ENCODE measurements at regions of chrX and their contacts with region 1.

Region 1: DNA sequence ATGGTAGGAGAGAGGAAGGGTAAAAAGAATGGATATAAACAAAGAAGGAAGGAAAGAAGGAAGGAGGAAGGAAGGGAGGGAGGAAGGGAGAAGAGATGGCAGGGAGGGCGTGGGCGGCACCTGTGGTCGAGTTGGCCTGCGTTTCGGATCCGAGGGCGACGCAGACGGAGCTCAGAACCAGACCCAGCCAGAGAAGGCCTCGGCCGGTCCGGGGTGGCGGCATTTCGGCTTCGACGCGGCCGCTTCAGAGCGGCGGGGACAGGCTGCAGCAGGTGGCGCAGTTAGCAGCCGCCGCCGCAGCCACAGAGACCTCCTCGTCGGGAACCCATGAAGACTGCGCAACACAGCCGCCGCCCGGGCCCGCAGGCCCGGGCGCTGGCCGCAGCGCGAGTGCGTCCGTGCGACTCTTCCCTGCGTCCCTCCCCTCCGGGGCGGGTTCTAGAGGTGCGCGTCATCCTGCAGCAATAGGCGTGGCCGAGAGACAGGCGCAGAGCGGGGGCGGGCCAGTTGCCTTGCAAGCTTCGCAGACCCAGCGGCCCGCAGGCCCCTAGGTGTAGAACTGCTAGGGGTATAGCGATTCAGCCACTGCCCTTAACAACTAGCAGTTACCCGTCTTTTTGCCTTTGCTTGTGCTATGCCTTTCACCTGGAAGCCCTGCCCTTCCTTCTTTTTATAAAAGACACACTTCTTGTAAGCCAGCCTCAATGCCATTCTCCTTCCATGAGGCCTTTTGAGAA is at the start of gene IDS:
- DNase-seq: peak; percentile 87
- H3K4me3 Mint-ChIP-seq: peak within 1 kb of the TSS; percentile 99
- H3K27ac Mint-ChIP-seq: peak within 1 kb of the TSS; percentile 100
- H3K4me1 Mint-ChIP-seq: peaks cover 45% of the 10 kb centered on the region
- H3K27me3 Mint-ChIP-seq: no peaks in the 10 kb centered on the region
- total RNA-seq, gene IDS: 46.6 and 48.9 TPM in 2 replicates

Region 2: GRCh38 chrX:147911192-147912022 is 1593.7 kb before region 1 on chrX and contains the start of gene FMR1:
- intact Hi-C with region 1: loop called (anchors 10 kb)
- DNase-seq: peak; percentile 91
- H3K4me3 Mint-ChIP-seq: peak within 1 kb of the TSS; percentile 96
- H3K27ac Mint-ChIP-seq: peak within 1 kb of the TSS; percentile 92
- H3K4me1 Mint-ChIP-seq: peaks cover 37% of the 10 kb centered on the region
- H3K27me3 Mint-ChIP-seq: no peaks in the 10 kb centered on the region
- total RNA-seq, gene FMR1: 35.9 and 37.5 TPM in 2 replicates

Region 3: DNA sequence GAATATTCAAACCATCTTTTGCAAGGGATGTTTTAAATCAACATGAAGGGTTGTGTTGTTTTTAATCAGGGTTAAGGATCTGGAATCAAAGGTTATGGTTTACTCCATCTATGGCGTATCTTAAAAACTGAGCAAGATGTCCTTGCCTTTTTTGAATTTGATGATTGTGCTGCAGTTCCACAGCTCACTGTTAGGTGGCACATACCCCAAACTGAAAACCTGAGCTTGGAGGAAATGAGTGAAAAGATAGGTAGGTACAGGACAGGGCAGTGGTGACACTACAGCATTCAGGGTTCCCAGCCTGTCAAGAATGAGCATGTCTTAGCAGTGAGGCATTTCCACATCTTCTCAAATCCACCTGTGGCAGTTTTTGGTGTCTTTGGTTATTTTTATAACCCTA is 22.6 kb after region 1 on chrX:
- intact Hi-C with region 1: loop called (anchors 1 kb)
- DNase-seq: no peak
- H3K4me3 Mint-ChIP-seq: no peak overlapping the region
- H3K27ac Mint-ChIP-seq: peak overlapping the region; percentile 74
- H3K4me1 Mint-ChIP-seq: peaks cover 19% of the 10 kb centered on the region
- H3K27me3 Mint-ChIP-seq: no peaks in the 10 kb centered on the region

Region 4: DNA sequence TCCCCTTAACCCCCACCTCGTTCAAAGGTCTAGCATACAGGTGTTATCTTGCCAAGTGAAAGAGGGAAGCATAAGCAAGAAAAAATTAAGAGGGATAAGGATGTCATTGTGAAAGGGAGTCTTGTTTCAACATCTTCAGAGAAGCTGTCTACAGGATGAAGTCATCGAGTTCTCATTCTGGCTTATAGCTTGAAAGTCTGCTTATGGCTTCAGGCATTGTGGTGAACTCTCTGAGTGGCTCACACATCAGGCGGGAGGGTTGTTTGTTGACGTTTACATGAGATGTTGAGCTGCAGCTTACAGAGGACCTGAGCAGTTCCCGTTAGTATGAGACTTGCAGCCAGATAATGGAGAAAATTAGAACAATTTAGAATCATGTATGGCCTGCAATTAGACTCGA is 65.6 kb after region 1 on chrX:
- intact Hi-C with region 1: loop called (anchors 10 kb)
- DNase-seq: no peak
- H3K4me3 Mint-ChIP-seq: no peak overlapping the region
- H3K27ac Mint-ChIP-seq: no peak overlapping the region
- H3K4me1 Mint-ChIP-seq: peaks cover 23% of the 10 kb centered on the region
- H3K27me3 Mint-ChIP-seq: peaks cover 2% of the 10 kb centered on the region

Region 5: DNA sequence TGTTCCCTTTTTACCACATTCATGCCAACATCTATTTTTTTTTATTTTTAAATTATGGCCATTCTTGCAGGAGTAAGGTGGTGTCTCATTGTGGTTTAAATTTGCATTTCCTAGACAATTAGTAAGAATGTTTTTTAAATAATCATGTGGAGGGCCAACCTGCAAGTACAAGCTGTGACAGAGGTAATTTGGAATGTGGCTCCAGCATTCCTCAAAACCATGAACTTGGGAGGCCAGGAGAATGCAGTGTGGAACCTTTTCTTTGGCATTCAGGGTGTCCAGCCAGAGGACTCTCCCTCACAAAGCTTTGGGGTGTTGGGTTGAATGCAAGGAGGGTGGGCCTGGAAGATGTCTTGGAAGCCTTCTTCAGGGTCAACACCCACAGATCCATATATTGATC is 133.8 kb after region 1 on chrX:
- intact Hi-C with region 1: no loop called
- DNase-seq: no peak
- H3K4me3 Mint-ChIP-seq: no peak overlapping the region
- H3K27ac Mint-ChIP-seq: no peak overlapping the region
- H3K4me1 Mint-ChIP-seq: no peaks in the 10 kb centered on the region
- H3K27me3 Mint-ChIP-seq: peaks cover 10% of the 10 kb centered on the region

Region 6: GRCh38 chrX:149830192-149830873 is 325.2 kb after region 1 on chrX:
- intact Hi-C with region 1: loop called (anchors 5 kb)
- DNase-seq: peak; percentile 14
- H3K4me3 Mint-ChIP-seq: peak overlapping the region; percentile 78
- H3K27ac Mint-ChIP-seq: peak overlapping the region; percentile 97
- H3K4me1 Mint-ChIP-seq: peaks cover 61% of the 10 kb centered on the region
- H3K27me3 Mint-ChIP-seq: peaks cover 4% of the 10 kb centered on the region

Region 7: GRCh38 chrX:150575416-150575808 is 1070.3 kb after region 1 on chrX:
- intact Hi-C with region 1: loop called (anchors 10 kb)
- DNase-seq: peak; percentile 16
- H3K4me3 Mint-ChIP-seq: peak overlapping the region; percentile 76
- H3K27ac Mint-ChIP-seq: peak overlapping the region; percentile 93
- H3K4me1 Mint-ChIP-seq: peaks cover 80% of the 10 kb centered on the region
- H3K27me3 Mint-ChIP-seq: no peaks in the 10 kb centered on the region

Region 8: GRCh38 chrX:150982788-150983520 is 1477.9 kb after region 1 on chrX and contains the start of gene HMGB3:
- intact Hi-C with region 1: loop called (anchors 10 kb)
- DNase-seq: peak; percentile 82
- H3K4me3 Mint-ChIP-seq: peak within 1 kb of the TSS; percentile 71
- H3K27ac Mint-ChIP-seq: peak within 1 kb of the TSS; percentile 44
- H3K4me1 Mint-ChIP-seq: peaks cover 6% of the 10 kb centered on the region
- H3K27me3 Mint-ChIP-seq: no peaks in the 10 kb centered on the region
- total RNA-seq, gene HMGB3: 29.6 and 32.3 TPM in 2 replicates

Measured in activated T-helper 1 cell treated with anti-CD3 and anti-CD28 coated beads, Interleukin-12 subunit alpha, Interleukin-12 subunit beta, Interleukin-2, Interleukin-4 antibody, amounts not matched to agents 30 ng/mL and 10 ng/mL and 1 ng/mL, durations not matched to agents 14 hours and 24 hours and 36 hours (primary cell).